ENCODE measurements at regions of chr2 and their contacts with region 1.

Region 1: DNA sequence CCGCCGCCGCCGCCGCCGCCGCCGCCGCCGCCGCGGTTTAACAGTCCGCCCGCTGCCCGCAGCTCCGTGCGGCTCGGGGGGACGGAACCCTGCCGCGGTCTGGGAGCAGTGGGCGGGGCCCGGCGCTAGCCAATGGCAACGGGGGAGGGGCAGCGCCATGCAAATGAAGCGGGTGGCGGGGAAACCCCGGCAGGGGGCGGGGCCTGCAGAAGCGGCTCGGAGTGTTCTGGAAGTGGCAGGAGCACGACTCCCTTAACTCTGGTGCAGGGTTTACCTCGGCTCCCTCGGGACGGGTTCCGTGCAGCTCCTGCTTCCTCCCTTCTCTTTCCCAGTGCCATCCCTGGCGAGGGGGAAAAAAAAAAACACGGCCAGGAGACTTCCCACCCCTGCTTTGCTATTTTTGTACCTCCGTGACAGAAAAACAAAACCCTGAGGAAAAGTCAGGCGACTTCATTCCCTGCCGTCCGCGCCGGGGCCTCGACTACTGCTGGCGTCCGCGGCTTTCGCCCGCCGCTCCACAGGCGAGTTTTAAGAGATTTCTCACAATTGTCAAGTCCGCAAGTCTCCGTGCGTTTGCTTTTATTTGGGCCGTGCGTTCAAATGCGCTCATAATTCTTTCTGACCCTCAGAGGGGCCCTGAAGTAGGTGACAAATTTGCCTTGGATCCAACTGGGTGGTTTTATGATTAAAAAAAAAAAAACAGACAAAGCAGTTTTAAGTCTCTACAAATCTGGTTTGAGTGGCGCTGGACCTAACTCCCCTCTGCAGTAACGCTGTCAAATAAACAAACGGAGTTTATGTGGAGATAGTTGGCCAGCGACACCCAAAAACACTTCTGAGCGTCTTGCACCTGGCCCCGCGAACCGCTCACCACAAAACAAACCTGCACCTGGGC is at the start of gene KANSL1L:
- DNase-seq: peak; percentile 96
- H3K4me3 Mint-ChIP-seq: peak within 1 kb of the TSS; percentile 99
- H3K27ac Mint-ChIP-seq: peak within 1 kb of the TSS; percentile 99
- H3K4me1 Mint-ChIP-seq: peaks cover 27% of the 10 kb centered on the region
- H3K27me3 Mint-ChIP-seq: no peaks in the 10 kb centered on the region
- CTCF ChIP-seq: no peak
- total RNA-seq, gene KANSL1L: 7.4 and 9.8 TPM in 2 replicates

Region 2: GRCh38 chr2:210002158-210003157 is 169.1 kb before region 1 on chr2 and contains the start of gene RPE:
- CTCF ChIA-PET with region 1: no interaction called
- POLR2A ChIA-PET with region 1: interaction called, 14 read pairs
- intact Hi-C with region 1: loop called (anchors 2 kb)
- DNase-seq: peak; percentile 96
- H3K4me3 Mint-ChIP-seq: peak within 1 kb of the TSS; percentile 91
- H3K27ac Mint-ChIP-seq: peak within 1 kb of the TSS; percentile 91
- H3K4me1 Mint-ChIP-seq: peaks cover 34% of the 10 kb centered on the region
- H3K27me3 Mint-ChIP-seq: no peaks in the 10 kb centered on the region
- CTCF ChIP-seq: no peak
- total RNA-seq, gene RPE: 90.6 and 92.1 TPM in 2 replicates

Region 3: DNA sequence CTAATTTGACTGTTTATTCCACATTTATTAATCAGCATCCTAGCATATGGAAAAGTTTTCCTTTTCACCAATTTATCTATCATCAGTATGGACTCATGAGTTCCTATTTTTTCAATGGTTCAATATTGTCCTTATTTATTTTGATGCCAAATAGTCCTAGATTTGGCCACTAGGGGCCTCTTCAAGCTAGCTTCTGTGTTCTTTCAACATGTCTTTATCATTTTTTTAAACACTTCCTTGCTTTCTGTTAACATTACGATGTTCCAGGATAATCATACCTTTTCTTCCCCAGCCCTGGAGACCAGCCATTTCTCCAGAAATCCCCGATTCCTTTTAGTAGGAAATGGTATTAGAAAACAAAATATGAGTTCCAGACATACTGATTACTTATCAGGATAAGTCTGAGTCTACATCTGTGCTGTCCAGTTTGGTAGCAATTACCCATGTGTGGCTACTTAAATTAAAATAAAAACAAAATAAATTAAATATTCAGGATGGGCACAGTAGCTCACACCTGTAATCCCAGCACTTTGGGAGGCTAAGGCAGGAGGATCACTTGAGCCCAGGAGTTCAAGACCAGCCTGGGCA is 98.5 kb before region 1 on chr2:
- CTCF ChIA-PET with region 1: no interaction called
- POLR2A ChIA-PET with region 1: interaction called, 10 read pairs
- intact Hi-C with region 1: loop called (anchors 5 kb)
- DNase-seq: peak; percentile 57
- H3K4me3 Mint-ChIP-seq: no peak overlapping the region
- H3K27ac Mint-ChIP-seq: no peak overlapping the region
- H3K4me1 Mint-ChIP-seq: no peaks in the 10 kb centered on the region
- H3K27me3 Mint-ChIP-seq: no peaks in the 10 kb centered on the region
- CTCF ChIP-seq: peak; percentile 52

Region 4: GRCh38 chr2:210189452-210190143 is 18.0 kb after region 1 on chr2:
- CTCF ChIA-PET with region 1: interaction called, 13 read pairs
- POLR2A ChIA-PET with region 1: interaction called, 17 read pairs
- intact Hi-C with region 1: no loop called
- DNase-seq: no peak
- H3K4me3 Mint-ChIP-seq: no peak overlapping the region
- H3K27ac Mint-ChIP-seq: no peak overlapping the region
- H3K4me1 Mint-ChIP-seq: no peaks in the 10 kb centered on the region
- H3K27me3 Mint-ChIP-seq: no peaks in the 10 kb centered on the region
- CTCF ChIP-seq: no peak

Region 5: GRCh38 chr2:210328666-210329065 is 157.1 kb after region 1 on chr2:
- CTCF ChIA-PET with region 1: no interaction called
- POLR2A ChIA-PET with region 1: no interaction called
- intact Hi-C with region 1: no loop called
- DNase-seq: no peak
- H3K4me3 Mint-ChIP-seq: no peak overlapping the region
- H3K27ac Mint-ChIP-seq: no peak overlapping the region
- H3K4me1 Mint-ChIP-seq: no peaks in the 10 kb centered on the region
- H3K27me3 Mint-ChIP-seq: peaks cover 39% of the 10 kb centered on the region
- CTCF ChIP-seq: no peak

Measured in MCF 10A (cell line).